PC-9 (cell line): ENCODE measurements at regions of chr9 and their contacts with region 1.

Region 1: GRCh38 chr9:115883457-115884329 is 269.9 kb upstream of the PAPPA start:
- DNase-seq: peak; percentile 50 to 53
- H3K4me3 ChIP-seq: no peak overlapping the region
- H3K27ac ChIP-seq: no peak overlapping the region
- H3K4me1 ChIP-seq: peaks cover 5% of the 10 kb centered on the region
- H3K27me3 ChIP-seq: no peaks in the 10 kb centered on the region
- CTCF ChIP-seq: peak; percentile 78

Region 2: GRCh38 chr9:115672477-115673316 is 211.0 kb before region 1 on chr9:
- CTCF ChIA-PET with region 1: no interaction called
- POLR2A ChIA-PET with region 1: interaction called, 4 read pairs
- intact Hi-C with region 1: loop called (anchors 2 kb)
- DNase-seq: peak; percentile 69 to 87
- H3K4me3 ChIP-seq: no peak overlapping the region; the same call in 1 of the 2 replicates
- H3K27ac ChIP-seq: peak overlapping the region; percentile 100
- H3K4me1 ChIP-seq: peaks cover 46% of the 10 kb centered on the region
- H3K27me3 ChIP-seq: no peaks in the 10 kb centered on the region
- CTCF ChIP-seq: no peak

Region 3: DNA sequence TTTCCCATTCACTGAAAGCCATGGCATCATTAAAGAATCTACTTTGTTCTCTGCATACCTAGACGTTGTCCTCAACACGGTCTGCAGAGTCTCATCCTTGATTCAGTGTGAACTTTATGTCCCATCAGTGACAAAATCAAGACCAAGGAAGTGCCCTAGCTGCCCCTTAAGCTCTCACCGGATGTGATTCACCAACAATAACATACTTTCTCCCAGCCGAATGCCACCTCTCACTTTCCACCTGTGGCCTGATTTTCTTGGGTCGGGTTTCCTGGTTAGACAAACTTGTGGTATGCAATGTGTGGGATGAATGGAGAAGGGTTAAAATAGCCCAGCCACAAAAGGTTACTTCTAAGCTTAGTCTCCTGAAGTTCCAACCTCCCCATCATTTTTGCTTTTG is 124.6 kb after region 1 on chr9:
- CTCF ChIA-PET with region 1: no interaction called
- POLR2A ChIA-PET with region 1: no interaction called
- intact Hi-C with region 1: loop called (anchors 1 kb)
- DNase-seq: peak; percentile 74 to 93
- H3K4me3 ChIP-seq: peak overlapping the region; percentile 17; the same call in 1 of the 2 replicates
- H3K27ac ChIP-seq: peak overlapping the region; percentile 84
- H3K4me1 ChIP-seq: peaks cover 55% of the 10 kb centered on the region
- H3K27me3 ChIP-seq: no peaks in the 10 kb centered on the region
- CTCF ChIP-seq: no peak

Region 4: DNA sequence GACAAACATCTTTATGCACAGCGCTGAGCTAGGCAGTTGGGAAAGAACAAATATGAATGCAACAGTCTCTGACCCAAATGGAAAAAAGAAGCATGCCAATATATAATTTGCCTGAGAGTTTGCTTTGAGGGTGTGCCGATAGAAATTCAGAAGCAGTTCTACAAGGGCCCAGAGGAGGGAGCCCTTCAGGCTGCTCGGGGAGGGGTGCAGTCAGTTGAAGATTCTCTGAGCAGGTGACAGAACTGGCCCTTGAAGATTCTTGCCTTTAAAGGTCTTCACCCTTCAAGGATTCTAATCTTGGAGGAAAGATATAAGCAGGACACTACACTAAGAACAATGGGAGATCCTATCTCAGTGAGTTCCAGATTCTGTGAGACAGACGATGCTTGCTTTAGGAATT is 266.2 kb after region 1 on chr9:
- CTCF ChIA-PET with region 1: no interaction called
- POLR2A ChIA-PET with region 1: no interaction called
- intact Hi-C with region 1: loop called (anchors 1 kb)
- DNase-seq: no peak
- H3K4me3 ChIP-seq: no peak overlapping the region
- H3K27ac ChIP-seq: no peak overlapping the region
- H3K4me1 ChIP-seq: peaks cover 11% of the 10 kb centered on the region
- H3K27me3 ChIP-seq: no peaks in the 10 kb centered on the region
- CTCF ChIP-seq: peak; percentile 72

Region 5: DNA sequence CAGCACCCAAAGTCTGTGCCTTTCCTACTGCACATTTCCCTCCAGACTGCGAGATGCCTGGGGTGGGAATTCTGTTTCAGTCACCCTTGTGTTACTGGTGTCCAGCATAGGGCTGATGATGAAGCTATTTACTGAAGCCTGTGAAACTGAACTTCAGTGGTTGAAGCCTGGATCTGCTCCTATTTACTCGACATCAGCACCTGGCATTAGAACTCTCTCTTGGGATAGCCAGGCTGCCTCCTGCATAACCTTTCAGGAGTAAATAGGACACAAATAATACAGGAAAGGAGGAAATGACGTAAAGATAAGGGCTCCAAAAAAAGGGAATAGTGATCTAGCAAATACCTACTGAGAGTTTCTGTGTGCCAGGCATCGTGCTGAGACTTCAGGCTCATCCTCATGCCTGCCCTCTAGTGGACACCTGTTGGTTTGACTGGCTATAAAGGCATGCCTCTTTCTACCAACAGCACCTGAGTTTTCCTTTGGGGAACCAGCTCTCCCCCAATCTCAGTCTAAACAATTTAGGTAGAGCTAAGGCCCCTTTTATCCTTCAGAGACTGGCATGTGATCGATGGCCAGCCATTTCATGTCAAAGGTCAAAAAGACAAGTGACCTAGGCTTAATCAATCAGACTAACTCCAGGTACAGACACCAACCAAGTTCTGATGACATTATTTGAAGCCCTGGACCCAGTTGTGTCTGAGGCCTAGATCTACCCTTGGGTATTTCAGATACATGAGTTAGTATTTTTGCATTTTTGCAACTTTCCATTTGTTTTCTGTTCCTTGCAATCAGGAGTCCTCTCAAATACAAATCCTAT is 611.3 kb after region 1 on chr9:
- CTCF ChIA-PET with region 1: no interaction called
- POLR2A ChIA-PET with region 1: no interaction called
- intact Hi-C with region 1: loop called (anchors 5 kb)
- DNase-seq: peak in 1 of 2 experiments; percentile 16
- H3K4me3 ChIP-seq: no peak overlapping the region
- H3K27ac ChIP-seq: no peak overlapping the region
- H3K4me1 ChIP-seq: no peaks in the 10 kb centered on the region
- H3K27me3 ChIP-seq: no peaks in the 10 kb centered on the region
- CTCF ChIP-seq: peak; percentile 79

Region 6: DNA sequence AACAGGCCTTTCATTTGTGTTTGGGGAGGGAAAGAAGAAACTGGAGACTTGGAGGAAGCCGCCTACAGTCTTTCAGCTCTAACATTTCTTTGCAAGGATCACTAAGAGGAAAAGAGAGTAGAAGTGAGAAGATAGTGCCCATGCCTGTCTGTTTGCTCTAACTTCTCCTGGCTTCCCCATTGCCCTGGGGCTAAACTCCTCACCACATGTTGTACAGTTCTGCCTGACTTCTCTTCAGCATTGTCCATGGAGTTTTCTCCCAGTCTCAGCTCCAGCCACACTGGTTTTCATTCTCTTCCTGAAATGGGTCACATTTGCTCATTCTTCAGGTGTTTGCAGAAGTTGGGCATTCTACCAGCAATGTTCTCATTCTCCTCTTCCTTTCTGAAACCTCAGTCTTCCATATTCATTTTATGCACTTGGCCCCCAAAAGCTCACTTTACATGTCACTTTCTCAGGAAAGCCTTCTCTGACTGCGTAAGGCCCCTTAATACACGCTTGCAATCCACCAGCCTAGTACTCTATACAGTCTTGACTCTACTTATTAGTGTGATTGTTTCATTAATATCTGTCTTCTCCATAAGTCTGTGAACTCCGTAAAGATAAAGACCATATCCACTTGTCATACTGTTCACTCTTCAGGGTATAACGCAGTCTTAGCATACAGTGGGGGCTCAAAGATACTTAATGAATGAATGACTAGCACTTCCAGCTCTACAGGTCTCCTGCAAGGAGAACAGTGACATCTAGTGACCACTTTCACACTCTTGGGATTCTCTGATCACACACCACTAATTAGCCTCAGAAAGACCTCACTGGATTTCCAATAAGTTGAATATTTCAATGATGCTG is 763.2 kb after region 1 on chr9:
- CTCF ChIA-PET with region 1: no interaction called
- POLR2A ChIA-PET with region 1: no interaction called
- intact Hi-C with region 1: loop called (anchors 2 kb)
- DNase-seq: peak in 1 of 2 experiments; percentile 7
- H3K4me3 ChIP-seq: no peak overlapping the region
- H3K27ac ChIP-seq: no peak overlapping the region
- H3K4me1 ChIP-seq: no peaks in the 10 kb centered on the region
- H3K27me3 ChIP-seq: no peaks in the 10 kb centered on the region
- CTCF ChIP-seq: peak; percentile 72